Psoas muscle (tissue), 8 donors: ENCODE measurements at regions of chr2 and their contacts with region 1.

Region 1: DNA sequence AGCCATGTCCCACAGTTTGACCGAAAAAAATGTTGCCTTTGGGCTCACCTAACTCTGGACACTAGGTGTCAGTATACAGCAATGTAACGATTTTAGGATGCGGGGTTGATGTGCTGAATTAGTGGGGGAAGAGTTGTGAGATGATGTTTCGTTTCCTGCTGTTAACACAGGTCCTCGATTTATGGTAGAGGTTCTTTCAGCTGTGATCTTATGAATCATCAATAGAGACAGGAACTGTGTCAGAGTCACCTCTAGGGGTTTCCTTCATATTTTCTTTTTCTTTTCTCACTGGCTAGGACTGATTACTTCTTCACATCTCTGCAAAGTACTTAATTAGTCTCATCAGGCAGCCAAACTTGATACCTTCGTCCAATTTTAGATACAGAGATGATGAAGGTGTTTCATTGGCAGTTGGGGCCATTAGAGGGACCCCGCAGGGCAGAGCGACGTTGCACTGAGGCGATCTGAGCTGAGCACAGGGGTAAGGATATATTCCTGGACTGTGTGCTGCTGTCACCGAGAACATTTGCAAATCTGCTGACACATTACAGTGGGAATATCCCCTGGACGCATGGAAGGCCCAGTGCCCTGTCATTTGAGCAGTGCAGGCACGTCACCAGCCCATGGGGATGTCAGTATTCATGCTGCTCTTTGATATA is 10.2 kb upstream of the MMADHC start:
- DNase-seq: no peak
- ATAC-seq: peak; percentile 79 to 97 (median 92)
- H3K4me3 ChIP-seq: peak overlapping the region; percentile 41
- H3K27ac ChIP-seq: no peak overlapping the region
- H3K4me1 ChIP-seq: no peaks in the 10 kb centered on the region
- H3K27me3 ChIP-seq: no peaks in the 10 kb centered on the region
- CTCF ChIP-seq: peak; percentile 81

Region 2: GRCh38 chr2:149686136-149687051 is 88.6 kb after region 1 on chr2:
- intact Hi-C with region 1: loop called in 1 of 2 experiments (anchors 5 kb)
- DNase-seq: peak; percentile 27 to 69
- ATAC-seq: peak; percentile 86 to 97 (median 91)
- H3K4me3 ChIP-seq: no peak overlapping the region
- H3K27ac ChIP-seq: peak overlapping the region; percentile 28
- H3K4me1 ChIP-seq: peaks cover 4% of the 10 kb centered on the region
- H3K27me3 ChIP-seq: no peaks in the 10 kb centered on the region
- CTCF ChIP-seq: no peak

Region 3: DNA sequence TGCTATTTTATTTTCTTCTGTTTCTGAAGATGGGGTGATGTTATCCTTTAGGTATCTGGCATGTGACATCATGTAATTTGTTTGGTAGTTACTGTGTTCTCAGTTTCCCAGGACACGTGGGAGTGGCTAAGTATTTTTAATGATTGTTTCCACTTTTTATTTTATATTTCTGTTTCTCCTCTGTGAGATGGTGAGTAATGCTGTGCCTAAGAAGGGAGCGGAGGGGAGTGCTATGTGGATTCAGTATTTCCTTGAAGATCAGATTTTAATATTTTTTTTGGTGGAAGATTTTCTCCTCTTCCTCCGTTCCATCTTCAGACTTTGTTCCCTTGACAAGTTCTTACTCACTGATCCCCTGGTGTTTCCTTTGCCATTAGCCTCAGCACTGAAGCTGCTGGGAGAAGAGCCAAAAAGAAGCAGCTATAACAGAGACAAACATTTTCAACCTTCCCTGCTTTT is 169.7 kb after region 1 on chr2:
- intact Hi-C with region 1: loop called (anchors 2 to 5 kb)
- DNase-seq: no peak
- ATAC-seq: no peak
- H3K4me3 ChIP-seq: no peak overlapping the region
- H3K27ac ChIP-seq: no peak overlapping the region
- H3K4me1 ChIP-seq: no peaks in the 10 kb centered on the region
- H3K27me3 ChIP-seq: no peaks in the 10 kb centered on the region
- CTCF ChIP-seq: no peak

Region 4: GRCh38 chr2:150487537-150488429 is 890.0 kb after region 1 on chr2 and contains the start of gene RND3:
- intact Hi-C with region 1: loop called (anchors 2 to 5 kb)
- DNase-seq: peak; percentile 93 to 95
- ATAC-seq: peak; percentile 82 to 88 (median 86)
- H3K4me3 ChIP-seq: peak within 1 kb of the TSS; percentile 82
- H3K27ac ChIP-seq: peak within 1 kb of the TSS; percentile 83
- H3K4me1 ChIP-seq: peaks cover 18% of the 10 kb centered on the region
- H3K27me3 ChIP-seq: no peaks in the 10 kb centered on the region
- CTCF ChIP-seq: peak; percentile 85
- total RNA-seq, gene RND3: 8.8 to 25.7 (median 16.4) TPM

Region 5: GRCh38 chr2:151051574-151052220 is 1453.9 kb after region 1 on chr2:
- intact Hi-C with region 1: loop called (anchors 5 kb)
- DNase-seq: no peak
- ATAC-seq: peak in 1 of 4 donors; percentile 47
- H3K4me3 ChIP-seq: no peak overlapping the region
- H3K27ac ChIP-seq: no peak overlapping the region
- H3K4me1 ChIP-seq: no peaks in the 10 kb centered on the region
- H3K27me3 ChIP-seq: no peaks in the 10 kb centered on the region
- CTCF ChIP-seq: peak; percentile 63

Region 6: GRCh38 chr2:151238527-151239487 is 1641.0 kb after region 1 on chr2:
- intact Hi-C with region 1: loop called (anchors 5 kb)
- DNase-seq: peak; percentile 49 to 57
- ATAC-seq: peak; percentile 68 to 90 (median 79)
- H3K4me3 ChIP-seq: no peak overlapping the region
- H3K27ac ChIP-seq: no peak overlapping the region
- H3K4me1 ChIP-seq: no peaks in the 10 kb centered on the region
- H3K27me3 ChIP-seq: no peaks in the 10 kb centered on the region
- CTCF ChIP-seq: peak; percentile 88

Region 7: DNA sequence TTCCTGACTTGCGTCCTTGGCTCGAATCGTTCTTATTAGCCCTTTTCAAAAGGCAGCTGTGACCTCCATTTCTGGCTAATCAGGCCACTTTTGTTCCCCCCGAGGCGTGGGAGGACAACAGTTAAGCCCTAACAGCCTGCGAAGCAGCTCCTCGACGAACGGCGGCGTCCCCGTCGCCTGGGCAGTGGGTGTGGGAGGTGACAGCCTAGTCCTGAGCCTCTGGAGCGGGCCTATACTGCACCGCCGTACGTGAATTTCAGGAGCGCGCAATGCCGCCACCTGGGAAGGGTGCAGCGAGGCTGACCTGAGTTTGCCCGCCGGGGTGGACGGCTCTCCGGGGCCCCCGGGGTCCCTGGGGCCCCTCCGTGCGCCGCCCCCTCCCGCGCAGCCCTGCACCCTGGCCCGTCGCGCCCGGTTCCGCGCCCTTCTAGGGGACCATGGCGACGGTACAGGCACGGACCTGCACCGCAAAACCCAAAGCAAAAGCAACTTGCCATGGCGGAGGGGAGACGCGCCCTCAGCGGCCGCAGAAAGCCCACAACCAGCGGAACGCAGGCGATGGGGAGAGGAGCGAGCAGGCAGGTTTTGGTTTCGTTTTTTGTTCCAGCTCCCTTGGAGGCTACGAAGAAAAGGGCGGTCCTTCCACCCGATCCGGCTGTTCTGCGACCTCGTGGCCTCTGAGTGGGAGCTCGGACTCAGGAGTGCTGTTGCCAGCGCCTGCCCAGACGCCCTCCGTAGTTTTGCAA is 1663.6 kb after region 1 on chr2 and contains the start of gene RBM43:
- intact Hi-C with region 1: loop called in 1 of 2 experiments (anchors 5 kb)
- DNase-seq: peak; percentile 92 to 95
- ATAC-seq: peak; percentile 91 to 95 (median 94)
- H3K4me3 ChIP-seq: peak within 1 kb of the TSS; percentile 96
- H3K27ac ChIP-seq: peak within 1 kb of the TSS; percentile 90
- H3K4me1 ChIP-seq: peaks cover 4% of the 10 kb centered on the region
- H3K27me3 ChIP-seq: no peaks in the 10 kb centered on the region
- CTCF ChIP-seq: peak; percentile 6
- total RNA-seq, gene RBM43: 0.68 to 3.1 (median 1.1) TPM